ENCODE measurements at regions of chr11 and their contacts with region 1.

Region 1: DNA sequence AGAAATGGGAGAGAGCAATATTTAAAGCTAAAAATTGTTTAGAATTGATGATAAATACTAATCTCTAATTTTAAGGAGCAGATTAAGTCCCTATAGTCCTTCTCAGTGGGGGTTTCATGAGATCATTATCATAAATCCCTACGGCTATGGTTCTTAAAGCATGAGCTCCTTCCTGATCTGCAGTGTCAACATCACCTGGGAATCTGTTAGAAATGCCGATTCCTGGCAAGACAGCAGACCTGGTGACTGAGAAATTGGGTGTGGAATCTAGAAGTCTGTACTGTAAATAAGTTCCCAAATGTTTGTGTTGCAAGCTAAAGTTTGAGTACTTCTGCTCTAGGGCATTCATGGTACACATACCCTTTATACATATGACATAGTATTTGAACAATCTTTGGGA is 12.6 kb downstream of the HIKESHI start:
- DNase-seq: no peak
- ATAC-seq: no peak
- H3K4me3 ChIP-seq: no peak overlapping the region
- H3K27ac ChIP-seq: no peak overlapping the region
- H3K4me1 ChIP-seq: peaks cover 0 to 3% of the 10 kb centered on the region in 2 donors
- H3K27me3 ChIP-seq: no peaks in the 10 kb centered on the region
- CTCF ChIP-seq: no peak
- POLR2A ChIP-seq: no peak

Region 2: DNA sequence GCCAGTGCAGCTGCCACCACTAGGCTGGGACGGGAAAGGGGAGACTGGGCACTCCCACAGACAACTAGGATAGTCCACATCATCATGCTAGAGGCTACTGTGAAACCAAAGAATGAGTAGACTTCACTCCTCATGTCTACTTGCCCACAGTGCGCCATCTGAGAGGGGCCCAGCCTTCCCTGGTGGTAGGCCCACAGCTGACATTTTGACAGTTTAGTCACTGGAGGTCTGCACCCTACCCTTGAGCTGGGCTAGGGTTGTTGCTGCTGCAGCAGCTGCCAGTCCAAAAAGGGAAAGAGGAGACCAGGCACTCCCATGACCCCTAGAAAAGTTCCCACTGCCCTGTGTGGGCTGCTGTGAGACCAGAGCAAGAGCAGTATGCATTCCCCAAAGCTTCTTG is 828.7 kb before region 1 on chr11:
- in situ Hi-C with region 1: no loop called
- intact Hi-C with region 1: loop called (anchors 5 kb)
- DNase-seq: no peak
- ATAC-seq: no peak
- H3K4me3 ChIP-seq: no peak overlapping the region
- H3K27ac ChIP-seq: no peak overlapping the region
- H3K4me1 ChIP-seq: no peaks in the 10 kb centered on the region
- H3K27me3 ChIP-seq: no peaks in the 10 kb centered on the region
- CTCF ChIP-seq: no peak
- POLR2A ChIP-seq: no peak